ENCODE measurements at regions of chr1 and their contacts with region 1.

Region 1: GRCh38 chr1:38015978-38016725 is 3.6 kb downstream of the UTP11 start:
- DNase-seq: peak; percentile 94 to 97
- ATAC-seq: peak; percentile 54 to 64
- H3K4me3 ChIP-seq: peak overlapping the region; percentile 10 to 29 (median 15)
- H3K27ac ChIP-seq: peak overlapping the region; percentile 94 to 100 (median 98)
- H3K4me1 ChIP-seq: peaks cover 84 to 91% of the 10 kb centered on the region in 2 donors
- H3K27me3 ChIP-seq: no peaks in the 10 kb centered on the region
- CTCF ChIP-seq: no peak
- POLR2A ChIP-seq: peak; percentile 60 to 72

Region 2: GRCh38 chr1:37989361-37989930 is 26.7 kb before region 1 on chr1:
- in situ Hi-C with region 1: no loop called
- intact Hi-C with region 1: loop called (anchors 2 kb)
- DNase-seq: no peak
- ATAC-seq: peak in 1 of 2 donors; percentile 10
- H3K4me3 ChIP-seq: peak overlapping the region; percentile 74 to 88 (median 80)
- H3K27ac ChIP-seq: peak overlapping the region; percentile 82 to 100 (median 96)
- H3K4me1 ChIP-seq: peaks cover 14 to 30% of the 10 kb centered on the region in 2 donors
- H3K27me3 ChIP-seq: no peaks in the 10 kb centered on the region
- CTCF ChIP-seq: no peak
- POLR2A ChIP-seq: no peak

Region 3: DNA sequence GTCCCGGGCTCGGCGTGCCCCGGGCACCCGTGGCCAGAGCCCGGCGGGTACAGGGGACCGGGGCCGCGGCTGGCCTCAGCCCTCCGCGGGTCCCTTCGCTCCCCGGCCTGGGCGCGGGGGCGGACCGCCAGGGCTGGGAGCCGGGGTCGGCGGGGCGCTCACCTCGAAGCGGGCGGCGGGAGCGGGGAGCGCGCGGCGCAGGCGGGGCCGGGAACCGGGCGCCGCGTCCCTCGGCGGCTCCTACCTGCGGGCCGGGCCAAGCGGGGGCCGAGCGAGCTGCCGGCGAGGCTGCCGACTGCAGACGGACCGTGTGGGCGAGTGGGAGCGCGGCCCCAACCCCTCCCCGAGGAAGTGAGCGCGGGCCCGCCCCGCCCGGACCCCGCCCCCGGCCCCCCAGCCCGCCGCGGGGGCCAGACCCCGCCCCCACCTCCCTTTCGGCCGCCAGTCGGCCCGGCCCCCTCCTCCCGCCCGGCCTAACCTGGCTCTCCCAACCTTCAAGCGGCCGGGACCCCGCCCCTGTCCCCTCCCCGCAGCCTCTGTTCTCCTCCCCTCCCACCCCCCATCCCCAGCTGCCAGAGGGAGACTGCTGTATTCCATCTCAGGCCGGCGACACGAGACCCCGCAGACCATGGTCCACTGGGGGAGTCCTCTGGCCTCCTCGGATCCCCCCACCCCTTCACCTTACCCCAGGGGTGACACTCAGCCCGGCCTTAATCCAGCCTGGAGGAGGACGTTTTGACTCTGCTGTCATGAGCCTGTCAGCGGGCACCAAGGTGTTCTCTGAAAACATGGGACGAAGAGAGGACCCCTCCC is 10.8 kb before region 1 on chr1 and contains the start of gene FHL3:
- in situ Hi-C with region 1: no loop called
- intact Hi-C with region 1: loop called (anchors 1 kb)
- DNase-seq: peak; percentile 88 to 95
- ATAC-seq: peak; percentile 5 to 11
- H3K4me3 ChIP-seq: peak within 1 kb of the TSS; percentile 74 to 89 (median 83)
- H3K27ac ChIP-seq: peak within 1 kb of the TSS; percentile 94 to 100 (median 98)
- H3K4me1 ChIP-seq: peaks cover 53 to 65% of the 10 kb centered on the region in 2 donors
- H3K27me3 ChIP-seq: no peaks in the 10 kb centered on the region
- CTCF ChIP-seq: no peak
- POLR2A ChIP-seq: peak; percentile 90 to 91
- total RNA-seq, gene FHL3: 725 to 1,282 (median 1,051) TPM

Measured in gastrocnemius medialis (tissue), 4 donors.